ENCODE measurements at regions of chr19 and their contacts with region 1.

Region 1: DNA sequence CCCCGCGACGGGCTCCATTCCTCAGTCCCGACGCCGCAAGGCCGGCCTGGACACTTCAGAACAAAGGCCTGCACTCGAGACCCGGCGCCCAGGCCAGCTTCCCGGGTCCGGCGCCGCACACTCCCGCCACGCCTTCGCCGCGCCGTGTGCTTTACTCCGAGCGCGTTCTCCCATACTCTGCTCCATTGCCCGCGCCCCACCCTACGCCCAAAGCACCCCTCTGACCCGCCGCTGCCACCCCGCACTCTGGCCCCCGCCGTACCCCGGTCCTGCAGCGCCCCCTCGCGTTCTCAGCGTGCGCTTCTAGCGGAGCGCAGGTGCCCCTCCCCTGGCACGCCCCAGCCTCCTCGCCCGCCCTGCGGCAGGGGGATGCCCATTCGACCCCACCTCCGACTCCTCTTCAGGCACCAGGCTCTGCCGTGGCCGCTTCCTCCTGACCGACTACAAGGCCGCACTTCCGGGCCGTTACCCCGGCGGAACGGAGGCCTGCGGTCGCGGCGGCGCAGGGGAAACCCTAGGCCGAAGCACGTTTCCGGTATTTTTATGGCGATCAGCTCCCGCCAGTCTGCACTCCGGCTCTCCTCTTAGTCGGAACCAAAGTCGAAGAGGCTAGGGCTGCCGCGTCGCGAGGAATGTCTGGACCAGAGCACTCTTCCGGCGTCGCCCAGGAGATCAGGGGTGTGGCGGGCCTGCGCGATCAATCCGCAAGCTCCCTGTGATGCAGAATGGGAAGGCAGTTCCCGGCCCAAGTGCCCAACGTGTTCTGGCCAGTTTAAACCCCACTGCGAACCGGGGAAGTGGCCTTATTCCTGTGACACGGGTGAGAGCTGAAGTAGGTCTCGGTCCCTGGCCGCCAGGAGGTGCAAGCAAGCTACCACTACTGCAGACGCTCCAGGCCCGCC is at the start of gene ZBTB45:
- DNase-seq: peak; percentile 94
- ATAC-seq: peak; percentile 74
- H3K4me3 ChIP-seq: peak within 1 kb of the TSS; percentile 78 to 90
- H3K27ac ChIP-seq: peak within 1 kb of the TSS; percentile 91
- H3K4me1 ChIP-seq: peaks cover 12 to 35% of the 10 kb centered on the region in 2 experiments
- H3K27me3 ChIP-seq: no peaks in the 10 kb centered on the region
- CTCF ChIP-seq: peak; percentile 69 to 75 (median 71)
- POLR2A ChIP-seq: peak; percentile 68
- RAD21 ChIP-seq: peak; percentile 90
- total RNA-seq, gene ZBTB45: 12.0 TPM

Region 2: DNA sequence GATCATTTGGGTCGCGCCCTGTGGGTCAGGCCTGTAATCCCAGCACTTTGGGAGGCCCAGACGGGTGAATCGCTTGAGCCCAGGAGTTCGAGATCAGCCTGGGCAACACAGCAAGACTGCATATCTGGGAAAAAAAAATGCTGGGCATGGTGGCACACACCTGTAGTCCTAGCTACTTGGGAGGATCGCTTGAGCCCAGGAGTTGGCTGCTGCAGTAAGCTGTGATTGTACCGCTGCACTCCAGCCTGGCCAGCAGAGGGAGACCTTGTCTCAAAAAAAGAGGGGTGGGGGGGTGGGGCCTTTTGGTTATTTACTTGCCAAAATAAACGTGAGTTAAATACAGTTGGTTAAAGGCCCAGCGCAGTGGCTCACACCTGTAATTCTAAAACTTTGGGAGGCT is 300.7 kb before region 1 on chr19:
- CTCF ChIA-PET with region 1: interaction called, 3 read pairs
- POLR2A ChIA-PET with region 1: no interaction called
- RAD21 ChIA-PET with region 1: no interaction called
- intact Hi-C with region 1: loop called (anchors 5 kb)
- DNase-seq: peak; percentile 40
- ATAC-seq: peak; percentile 91
- H3K4me3 ChIP-seq: no peak overlapping the region
- H3K27ac ChIP-seq: no peak overlapping the region
- H3K4me1 ChIP-seq: no peaks in the 10 kb centered on the region
- H3K27me3 ChIP-seq: no peaks in the 10 kb centered on the region
- CTCF ChIP-seq: peak; percentile 16 to 58 (median 36); a peak in 5 of 6 replicates
- POLR2A ChIP-seq: no peak
- RAD21 ChIP-seq: peak; percentile 62

Region 3: GRCh38 chr19:58362272-58362994 is 157.2 kb before region 1 on chr19 and contains the start of gene ZNF497:
- CTCF ChIA-PET with region 1: interaction called, 7 read pairs
- POLR2A ChIA-PET with region 1: interaction called, 10 read pairs
- RAD21 ChIA-PET with region 1: no interaction called
- intact Hi-C with region 1: no loop called
- DNase-seq: peak; percentile 94
- ATAC-seq: peak; percentile 91
- H3K4me3 ChIP-seq: peak within 1 kb of the TSS; percentile 81 to 90
- H3K27ac ChIP-seq: peak within 1 kb of the TSS; percentile 100
- H3K4me1 ChIP-seq: peaks cover 6 to 19% of the 10 kb centered on the region in 2 experiments; a peak in 3 of 4 replicates
- H3K27me3 ChIP-seq: no peaks in the 10 kb centered on the region
- CTCF ChIP-seq: no peak
- POLR2A ChIP-seq: peak; percentile 84
- RAD21 ChIP-seq: no peak
- total RNA-seq, gene ZNF497: 5.1 TPM

Region 4: DNA sequence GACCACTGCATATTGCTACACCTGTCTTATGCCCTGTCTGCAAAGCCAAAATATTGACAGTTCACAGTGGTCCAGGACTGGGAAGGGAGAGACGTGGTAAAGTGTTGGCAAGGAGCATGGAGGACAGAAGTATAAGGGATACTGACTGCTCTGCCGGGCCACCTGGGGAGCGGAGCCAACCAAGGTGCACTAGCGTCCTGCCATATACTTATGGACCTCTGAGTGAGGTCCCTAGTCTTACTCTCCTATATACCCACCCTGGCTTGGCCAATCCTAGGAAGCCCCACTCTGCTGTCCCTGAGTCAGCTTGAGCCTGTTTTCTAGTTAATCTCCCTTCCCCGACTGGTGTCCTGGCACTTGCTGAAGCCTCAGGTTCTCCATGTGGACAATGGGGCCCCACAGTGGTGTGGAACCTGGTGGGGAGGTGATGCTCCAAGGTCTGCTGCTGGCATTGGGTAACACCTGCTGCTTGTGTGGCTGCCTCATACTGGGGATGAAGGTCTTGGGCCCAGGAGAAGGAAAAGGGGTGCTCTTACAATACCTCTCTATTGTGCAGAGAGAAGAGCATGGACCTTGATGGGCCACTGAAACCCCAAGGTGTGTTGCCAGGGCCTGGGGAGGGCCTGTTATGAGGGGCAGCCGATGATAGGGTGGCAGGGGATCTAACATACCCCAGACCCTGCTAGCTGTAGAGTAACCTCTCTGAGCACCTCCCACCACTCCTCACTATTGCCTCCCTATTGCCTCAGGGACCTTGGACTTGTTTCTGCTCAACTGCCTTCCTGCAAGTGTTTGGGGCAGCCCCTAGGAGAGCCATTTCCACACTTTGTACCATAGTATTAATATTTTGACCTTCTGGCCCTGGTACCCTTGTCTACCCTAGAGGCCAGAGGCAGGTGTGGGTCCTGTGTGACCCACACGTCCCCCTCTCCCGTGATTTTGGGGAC is 17.5 kb after region 1 on chr19:
- CTCF ChIA-PET with region 1: no interaction called
- POLR2A ChIA-PET with region 1: no interaction called
- RAD21 ChIA-PET with region 1: no interaction called
- intact Hi-C with region 1: no loop called
- DNase-seq: no peak
- ATAC-seq: no peak
- H3K4me3 ChIP-seq: no peak overlapping the region
- H3K27ac ChIP-seq: no peak overlapping the region
- H3K4me1 ChIP-seq: no peaks in the 10 kb centered on the region
- H3K27me3 ChIP-seq: peaks cover 14% of the 10 kb centered on the region; the same call in 1 of the 2 replicates
- CTCF ChIP-seq: no peak
- POLR2A ChIP-seq: no peak
- RAD21 ChIP-seq: no peak

Region 5: DNA sequence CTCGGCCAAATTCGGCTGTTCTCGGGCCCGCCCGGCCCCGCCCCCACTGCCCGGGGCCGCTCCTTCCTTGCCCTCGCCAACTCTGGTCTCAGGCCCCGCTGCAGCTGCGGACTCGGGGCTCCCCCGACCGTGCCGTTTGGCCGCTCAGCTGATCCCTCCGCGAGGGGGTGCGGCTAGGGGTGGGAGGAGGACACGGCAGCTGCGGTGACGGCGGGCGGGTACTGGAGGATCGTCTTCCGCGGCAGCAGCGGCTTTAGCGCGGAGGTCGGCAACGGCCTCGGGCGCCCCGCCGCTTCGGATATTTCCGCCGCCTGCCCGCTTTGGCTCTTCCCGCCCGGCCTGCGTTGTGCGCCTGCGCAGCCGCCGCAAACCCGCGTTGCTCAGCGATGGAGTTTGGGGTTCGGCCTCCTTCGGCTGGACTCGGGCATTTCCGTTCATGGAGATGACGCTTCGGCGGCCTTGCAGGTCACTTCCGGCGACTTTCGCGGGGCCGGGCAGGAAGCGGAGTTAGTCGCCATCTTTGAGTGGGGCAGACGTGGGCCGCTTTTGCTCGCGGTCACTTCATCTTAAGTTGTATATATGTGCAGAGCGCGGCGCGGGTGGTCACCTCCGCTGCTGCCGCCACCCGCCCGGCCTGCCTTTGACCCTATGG is 39.1 kb after region 1 on chr19:
- CTCF ChIA-PET with region 1: interaction called, 20 read pairs
- POLR2A ChIA-PET with region 1: interaction called, 33 read pairs
- RAD21 ChIA-PET with region 1: interaction called in 1 of 2 experiments, 6 read pairs
- intact Hi-C with region 1: no loop called
- DNase-seq: peak; percentile 98
- ATAC-seq: peak; percentile 68
- H3K4me3 ChIP-seq: peak overlapping the region; percentile 74 to 99
- H3K27ac ChIP-seq: peak overlapping the region; percentile 98
- H3K4me1 ChIP-seq: peaks cover 22 to 49% of the 10 kb centered on the region in 2 experiments
- H3K27me3 ChIP-seq: no peaks in the 10 kb centered on the region
- CTCF ChIP-seq: no peak
- POLR2A ChIP-seq: no peak
- RAD21 ChIP-seq: no peak

Region 6: GRCh38 chr19:58581227-58582151 is 61.9 kb after region 1 on chr19:
- CTCF ChIA-PET with region 1: interaction called, 17 read pairs
- POLR2A ChIA-PET with region 1: interaction called, 9 read pairs
- RAD21 ChIA-PET with region 1: interaction called in 1 of 2 experiments, 7 read pairs
- intact Hi-C with region 1: no loop called
- DNase-seq: peak; percentile 76
- ATAC-seq: peak; percentile 97
- H3K4me3 ChIP-seq: no peak overlapping the region
- H3K27ac ChIP-seq: peak overlapping the region; percentile 52
- H3K4me1 ChIP-seq: peaks cover 3 to 9% of the 10 kb centered on the region in 2 experiments; a peak in 3 of 4 replicates
- H3K27me3 ChIP-seq: no peaks in the 10 kb centered on the region
- CTCF ChIP-seq: peak; percentile 99
- POLR2A ChIP-seq: no peak
- RAD21 ChIP-seq: peak; percentile 98